ENCODE measurements at regions of chr1 and their contacts with region 1.

Region 1: DNA sequence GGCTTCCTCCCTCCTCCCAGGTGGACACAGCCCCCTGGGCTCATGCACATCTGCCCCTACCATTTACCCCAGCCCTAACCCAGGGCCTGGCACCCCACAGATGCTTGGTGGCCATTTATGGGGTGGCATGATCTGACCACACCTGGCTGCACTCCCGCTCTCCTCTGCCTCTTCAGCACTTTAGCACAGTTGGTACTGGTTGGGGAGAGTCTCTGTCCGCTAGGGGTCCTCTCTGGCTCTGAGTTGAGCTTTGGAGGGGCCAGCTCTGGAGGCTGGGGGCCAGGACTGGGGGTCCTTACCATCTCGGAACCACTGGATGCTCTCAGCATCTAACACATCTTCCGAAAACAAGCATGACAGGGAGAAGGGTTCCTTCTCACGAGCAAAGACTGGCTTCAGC is 17.4 kb downstream of the MYOM3 start:
- DNase-seq: peak in 1 of 2 experiments; percentile 63
- H3K4me3 ChIP-seq: no peak overlapping the region
- H3K27ac ChIP-seq: no peak overlapping the region
- H3K4me1 ChIP-seq: peaks cover 0 to 6% (median 2%) of the 10 kb centered on the region in 4 experiments; a peak in 3 of 7 replicates
- H3K27me3 ChIP-seq: no peaks in the 10 kb centered on the region
- CTCF ChIP-seq: peak; percentile 48 to 57 (median 48)
- EP300 ChIP-seq: no peak
- POLR2A ChIP-seq: no peak
- RAD21 ChIP-seq: peak; percentile 32 to 53; a peak in 3 of 4 replicates

Region 2: DNA sequence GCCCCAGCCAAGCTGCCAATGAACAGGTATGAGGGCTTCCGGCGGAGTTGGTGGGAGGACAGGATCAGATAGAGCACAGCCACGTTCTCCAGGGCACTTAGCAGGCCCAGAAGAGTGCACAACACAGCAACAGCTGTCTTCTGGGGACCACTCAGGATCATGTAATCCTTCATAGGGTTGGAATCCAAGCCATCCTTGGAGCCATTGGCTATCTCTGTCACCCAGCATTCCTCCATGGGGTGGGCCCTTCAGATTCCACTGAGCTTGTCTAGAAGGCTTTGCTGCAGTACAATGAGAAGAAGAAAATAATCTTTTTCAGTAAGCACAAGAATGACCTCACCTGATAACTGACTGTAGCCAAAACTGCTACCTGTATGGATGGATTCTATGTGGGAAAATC is 219.2 kb before region 1 on chr1:
- CTCF ChIA-PET with region 1: no interaction called
- POLR2A ChIA-PET with region 1: no interaction called
- DNase-seq: no peak
- H3K4me3 ChIP-seq: no peak overlapping the region
- H3K27ac ChIP-seq: no peak overlapping the region
- H3K4me1 ChIP-seq: no peaks in the 10 kb centered on the region
- H3K27me3 ChIP-seq: no peaks in the 10 kb centered on the region
- CTCF ChIP-seq: no peak
- EP300 ChIP-seq: no peak
- POLR2A ChIP-seq: no peak
- RAD21 ChIP-seq: no peak

Region 3: DNA sequence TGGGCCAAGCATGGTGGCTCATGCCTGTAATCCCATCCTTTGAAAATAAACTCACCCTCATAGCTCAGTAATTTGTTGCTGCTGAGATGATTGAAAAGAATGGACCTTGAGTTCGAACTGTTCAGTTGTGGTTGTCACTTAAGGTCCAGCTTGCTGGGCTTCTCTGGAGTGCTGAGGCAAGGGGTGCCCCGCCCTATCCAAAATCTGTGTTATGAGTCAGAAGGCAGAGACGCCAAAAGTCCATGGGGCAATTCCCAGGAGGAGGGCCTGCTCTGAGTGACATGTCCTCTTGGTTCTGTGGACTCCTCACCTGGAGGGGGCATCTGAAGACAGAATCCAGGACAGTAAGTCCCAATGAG is 47.5 kb before region 1 on chr1:
- CTCF ChIA-PET with region 1: no interaction called
- POLR2A ChIA-PET with region 1: no interaction called
- DNase-seq: no peak
- H3K4me3 ChIP-seq: no peak overlapping the region
- H3K27ac ChIP-seq: no peak overlapping the region
- H3K4me1 ChIP-seq: no peaks in the 10 kb centered on the region; a peak in 1 of 7 replicates
- H3K27me3 ChIP-seq: no peaks in the 10 kb centered on the region
- CTCF ChIP-seq: no peak
- EP300 ChIP-seq: no peak
- POLR2A ChIP-seq: no peak
- RAD21 ChIP-seq: no peak

Region 4: GRCh38 chr1:24080131-24080530 is 14.4 kb before region 1 on chr1:
- CTCF ChIA-PET with region 1: interaction called, 19 read pairs
- POLR2A ChIA-PET with region 1: interaction called, 5 read pairs
- DNase-seq: no peak
- H3K4me3 ChIP-seq: no peak overlapping the region
- H3K27ac ChIP-seq: no peak overlapping the region
- H3K4me1 ChIP-seq: peaks cover 0 to 2% (median 0%) of the 10 kb centered on the region in 4 experiments; a peak in 1 of 7 replicates
- H3K27me3 ChIP-seq: no peaks in the 10 kb centered on the region
- CTCF ChIP-seq: no peak
- EP300 ChIP-seq: no peak
- POLR2A ChIP-seq: no peak
- RAD21 ChIP-seq: no peak

Measured in H1 (cell line).